HEK293 (cell line): ENCODE measurements at regions of chr20 and their contacts with region 1.

Region 1: GRCh38 chr20:51220293-51220706 is 197.4 kb upstream of the KCNG1 start:
- H3K4me3 ChIP-seq: no peak overlapping the region
- H3K27ac ChIP-seq: no peak overlapping the region
- H3K4me1 ChIP-seq: no peaks in the 10 kb centered on the region
- CTCF ChIP-seq: peak; percentile 77

Region 2: DNA sequence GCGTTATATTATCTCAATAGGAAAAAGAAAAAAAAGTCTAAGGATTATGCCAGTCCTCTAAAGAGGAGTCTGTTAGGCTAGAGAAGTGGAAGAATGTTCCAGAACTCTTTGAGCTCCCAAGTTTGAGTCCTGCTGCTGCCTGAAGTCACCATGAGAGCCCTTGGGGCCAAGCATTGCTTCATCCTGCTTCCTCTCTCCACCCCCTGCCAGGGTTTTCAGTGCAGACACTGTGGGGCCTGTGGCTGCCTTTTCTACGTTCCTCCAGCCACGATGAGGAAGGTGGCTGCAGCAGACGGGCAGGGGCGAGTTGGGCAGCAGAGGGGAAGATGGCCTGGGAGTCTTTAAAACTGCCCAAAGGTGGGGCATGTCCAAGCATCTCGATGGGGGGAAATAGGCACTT is 17.0 kb after region 1 on chr20:
- CTCF ChIA-PET with region 1: interaction called, 10 read pairs
- POLR2A ChIA-PET with region 1: no interaction called
- H3K4me3 ChIP-seq: no peak overlapping the region
- H3K27ac ChIP-seq: no peak overlapping the region
- H3K4me1 ChIP-seq: no peaks in the 10 kb centered on the region
- CTCF ChIP-seq: no peak